Common myeloid progenitor, CD34-positive (primary cell): ENCODE measurements at regions of chr2 and their contacts with region 1.

Region 1: DNA sequence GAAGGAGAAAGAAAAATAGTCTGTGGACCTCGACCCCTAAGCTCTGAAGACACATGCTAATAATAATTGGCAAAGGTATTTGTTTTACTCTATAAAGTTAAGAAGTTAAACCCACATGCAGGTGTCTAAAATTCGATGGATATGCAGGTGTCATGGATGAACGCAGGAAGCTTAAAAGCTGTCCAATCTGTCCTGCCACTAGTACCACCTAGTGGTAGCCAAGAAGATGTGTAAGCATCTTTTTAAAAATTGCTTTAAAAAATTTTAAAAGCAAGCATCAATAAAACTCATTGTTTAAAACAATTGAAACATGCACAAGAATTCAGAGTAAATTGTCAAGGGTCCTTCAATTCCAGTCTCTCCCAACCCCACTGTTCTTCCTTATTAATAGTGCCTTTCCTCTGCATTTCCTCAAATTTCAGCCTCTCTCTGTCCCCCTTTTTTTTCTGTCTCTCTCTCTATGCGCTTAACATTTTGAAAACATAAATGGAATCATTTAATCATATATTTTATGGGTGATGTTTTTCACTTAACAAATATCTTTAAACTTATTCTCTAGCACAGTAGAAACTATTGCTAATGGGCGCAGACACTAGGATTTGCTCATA is 30.6 kb upstream of the PPP3R1 start:
- DNase-seq: peak; percentile 38 to 65 (median 55)
- H3K4me3 ChIP-seq: no peak overlapping the region
- H3K27ac ChIP-seq: no peak overlapping the region
- H3K4me1 ChIP-seq: peaks cover 0 to 12% (median 5%) of the 10 kb centered on the region in 4 experiments
- H3K27me3 ChIP-seq: no peaks in the 10 kb centered on the region

Region 2: GRCh38 chr2:68185541-68186164 is 97.3 kb before region 1 on chr2:
- CTCF ChIA-PET with region 1: interaction called, 10 read pairs
- POLR2A ChIA-PET with region 1: no interaction called
- DNase-seq: peak; percentile 75 to 84 (median 79)
- H3K4me3 ChIP-seq: no peak overlapping the region
- H3K27ac ChIP-seq: no peak overlapping the region
- H3K4me1 ChIP-seq: peaks cover 0 to 6% (median 2%) of the 10 kb centered on the region in 4 experiments
- H3K27me3 ChIP-seq: no peaks in the 10 kb centered on the region

Region 3: GRCh38 chr2:68272246-68272994 is 10.5 kb before region 1 on chr2:
- CTCF ChIA-PET with region 1: interaction called, 32 read pairs
- POLR2A ChIA-PET with region 1: no interaction called
- DNase-seq: peak; percentile 79 to 96 (median 92)
- H3K4me3 ChIP-seq: peak overlapping the region in 2 of 7 experiments; percentile 37 to 46
- H3K27ac ChIP-seq: peak overlapping the region; percentile 82 to 95
- H3K4me1 ChIP-seq: peaks cover 10 to 23% (median 13%) of the 10 kb centered on the region in 4 experiments
- H3K27me3 ChIP-seq: no peaks in the 10 kb centered on the region

Region 4: DNA sequence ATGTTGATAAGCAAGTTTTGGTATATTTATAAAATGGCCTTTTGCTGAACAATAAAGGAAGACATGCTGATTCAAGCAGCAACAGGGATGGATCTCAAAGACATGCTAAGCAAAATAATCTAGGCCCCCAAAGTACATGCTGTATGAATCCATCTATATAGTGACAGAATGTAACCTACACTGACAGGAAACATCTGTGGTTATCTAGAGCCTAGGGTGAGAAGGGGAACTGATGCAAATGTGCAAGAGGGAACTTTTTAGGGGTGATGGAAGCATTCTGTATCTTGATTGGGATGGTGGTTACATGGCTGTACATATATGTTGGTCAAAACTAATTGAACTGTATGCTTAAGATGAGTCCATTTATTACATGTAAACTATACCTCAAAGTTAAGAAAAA is 12.6 kb after region 1 on chr2:
- CTCF ChIA-PET with region 1: interaction called, 23 read pairs
- POLR2A ChIA-PET with region 1: no interaction called
- DNase-seq: peak; percentile 63 to 92 (median 86)
- H3K4me3 ChIP-seq: no peak overlapping the region
- H3K27ac ChIP-seq: no peak overlapping the region
- H3K4me1 ChIP-seq: peaks cover 9 to 30% (median 24%) of the 10 kb centered on the region in 4 experiments
- H3K27me3 ChIP-seq: no peaks in the 10 kb centered on the region